ENCODE measurements at regions of chr10 and their contacts with region 1.

Region 1: GRCh38 chr10:133278577-133279265 is 2.1 kb upstream of the ADAM8 start:
- DNase-seq: peak; percentile 88 to 97 (median 96)
- H3K4me3 ChIP-seq: peak overlapping the region in 5 of 7 experiments; percentile 29 to 65 (median 53)
- H3K27ac ChIP-seq: peak overlapping the region; percentile 85 to 93
- H3K4me1 ChIP-seq: peaks cover 11 to 74% (median 71%) of the 10 kb centered on the region in 4 experiments
- H3K27me3 ChIP-seq: no peaks in the 10 kb centered on the region

Region 2: DNA sequence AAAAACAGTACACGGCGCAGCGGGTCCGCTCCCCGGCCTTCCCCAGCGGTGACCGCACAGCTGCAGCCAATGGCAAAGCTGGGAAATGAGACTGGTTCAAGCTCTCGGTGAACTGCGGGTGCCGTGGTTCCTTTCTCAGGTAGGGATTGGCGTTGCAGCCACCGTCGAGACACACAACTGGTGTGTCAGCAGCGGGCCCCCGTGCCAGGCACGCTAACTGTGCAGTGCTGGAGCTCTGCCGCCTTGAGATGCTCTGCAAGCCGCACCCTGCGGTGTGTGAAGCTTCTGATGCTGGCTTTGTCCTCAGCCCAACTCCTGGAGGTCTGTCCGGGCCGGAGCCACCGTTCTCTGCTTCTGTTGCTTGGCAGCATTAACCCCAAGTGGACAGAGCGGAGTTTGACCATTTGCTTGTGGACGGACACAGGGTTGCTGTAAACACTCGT is 472.1 kb before region 1 on chr10:
- CTCF ChIA-PET with region 1: no interaction called
- POLR2A ChIA-PET with region 1: no interaction called
- DNase-seq: no peak
- H3K4me3 ChIP-seq: no peak overlapping the region
- H3K27ac ChIP-seq: no peak overlapping the region
- H3K4me1 ChIP-seq: no peaks in the 10 kb centered on the region
- H3K27me3 ChIP-seq: peaks cover 0 to 35% (median 5%) of the 10 kb centered on the region in 5 experiments

Region 3: DNA sequence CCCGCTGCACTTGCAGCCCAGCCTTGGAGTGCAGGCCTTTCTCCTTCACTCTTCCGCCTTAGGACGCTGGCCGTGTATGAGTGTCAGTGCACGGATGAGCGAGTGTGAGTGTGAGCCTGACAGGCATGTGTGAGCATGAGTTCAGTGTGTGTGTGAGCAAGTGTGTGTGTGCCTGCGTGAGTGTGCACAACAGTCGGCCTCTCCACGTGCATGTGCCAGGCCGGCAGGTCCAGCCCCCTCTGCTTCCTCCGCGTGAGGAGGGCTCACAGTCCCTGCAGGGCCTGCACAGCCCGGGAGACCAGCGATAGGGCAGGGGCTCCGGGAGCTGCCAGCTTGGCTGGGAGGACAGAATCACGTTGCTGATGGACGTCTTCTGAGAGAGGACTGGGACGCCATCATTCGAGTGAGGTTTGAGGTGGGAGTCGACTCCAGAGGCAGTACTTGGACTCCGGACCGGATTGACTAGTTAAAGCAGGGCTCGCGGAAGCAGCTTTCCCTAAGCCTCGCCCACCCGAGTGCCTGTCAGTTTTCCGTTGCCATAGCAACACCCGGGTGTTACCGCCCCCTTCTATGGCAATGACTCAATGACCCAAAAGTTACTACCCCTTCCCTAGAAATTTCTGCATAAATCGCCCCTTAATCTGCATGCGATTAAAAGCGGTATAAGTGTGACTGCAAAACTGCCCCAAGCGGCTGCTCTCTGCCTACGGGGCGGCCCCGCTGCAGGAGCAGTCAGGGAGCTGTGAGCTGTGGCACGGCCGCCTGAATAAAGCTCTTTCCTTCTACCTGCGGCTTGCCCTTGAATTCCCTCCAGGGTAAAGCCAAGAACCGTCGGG is 316.7 kb before region 1 on chr10:
- CTCF ChIA-PET with region 1: no interaction called
- POLR2A ChIA-PET with region 1: no interaction called
- DNase-seq: peak; percentile 70 to 89 (median 85)
- H3K4me3 ChIP-seq: peak overlapping the region; percentile 42 to 95 (median 75)
- H3K27ac ChIP-seq: peak overlapping the region in 1 of 2 experiments; percentile 54
- H3K4me1 ChIP-seq: peaks cover 0 to 10% (median 4%) of the 10 kb centered on the region in 4 experiments
- H3K27me3 ChIP-seq: peaks cover 0 to 15% (median 7%) of the 10 kb centered on the region in 5 experiments

Region 4: DNA sequence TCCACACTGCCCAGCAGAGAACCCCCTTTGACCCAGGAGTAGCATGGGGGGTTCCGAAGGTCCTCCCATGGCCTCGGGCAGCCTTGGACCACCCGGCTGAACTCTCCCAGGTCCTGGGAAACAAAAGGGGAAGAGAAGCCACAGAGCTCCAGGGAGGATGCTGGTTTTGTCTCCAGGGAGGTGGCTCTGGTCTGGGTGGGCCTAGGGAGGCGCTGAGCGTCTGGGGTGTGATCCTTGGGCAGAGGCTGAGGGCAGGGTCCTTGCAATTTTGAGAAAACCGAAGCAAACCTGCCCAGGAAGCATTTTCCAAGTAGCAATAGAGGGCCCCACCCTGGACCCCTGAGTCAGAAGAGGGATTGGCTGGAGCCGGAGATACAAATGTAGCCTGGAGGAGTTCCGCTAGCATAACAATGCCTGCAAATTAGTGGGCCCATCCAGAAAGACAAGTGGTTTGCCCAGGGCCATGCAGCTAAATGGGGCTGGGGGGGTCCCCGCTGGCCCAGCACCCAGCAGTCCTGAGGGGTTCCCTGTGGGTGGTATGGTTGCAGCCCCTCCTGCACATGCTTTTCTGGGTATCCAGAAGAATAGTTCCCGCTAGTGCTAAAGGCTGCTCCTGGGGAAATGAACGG is 46.7 kb before region 1 on chr10:
- CTCF ChIA-PET with region 1: no interaction called
- POLR2A ChIA-PET with region 1: no interaction called
- DNase-seq: no peak
- H3K4me3 ChIP-seq: no peak overlapping the region
- H3K27ac ChIP-seq: no peak overlapping the region
- H3K4me1 ChIP-seq: peaks cover 0 to 37% (median 27%) of the 10 kb centered on the region in 4 experiments
- H3K27me3 ChIP-seq: peaks cover 0 to 91% (median 23%) of the 10 kb centered on the region in 5 experiments

Region 5: GRCh38 chr10:133261726-133262325 is 16.9 kb before region 1 on chr10:
- CTCF ChIA-PET with region 1: interaction called, 112 read pairs
- POLR2A ChIA-PET with region 1: interaction called, 63 read pairs
- DNase-seq: peak in 2 of 3 donors; percentile 64 to 70
- H3K4me3 ChIP-seq: peak overlapping the region in 6 of 7 experiments; percentile 19 to 74 (median 59)
- H3K27ac ChIP-seq: no peak overlapping the region
- H3K4me1 ChIP-seq: peaks cover 5 to 64% (median 61%) of the 10 kb centered on the region in 4 experiments
- H3K27me3 ChIP-seq: no peaks in the 10 kb centered on the region

Region 6: DNA sequence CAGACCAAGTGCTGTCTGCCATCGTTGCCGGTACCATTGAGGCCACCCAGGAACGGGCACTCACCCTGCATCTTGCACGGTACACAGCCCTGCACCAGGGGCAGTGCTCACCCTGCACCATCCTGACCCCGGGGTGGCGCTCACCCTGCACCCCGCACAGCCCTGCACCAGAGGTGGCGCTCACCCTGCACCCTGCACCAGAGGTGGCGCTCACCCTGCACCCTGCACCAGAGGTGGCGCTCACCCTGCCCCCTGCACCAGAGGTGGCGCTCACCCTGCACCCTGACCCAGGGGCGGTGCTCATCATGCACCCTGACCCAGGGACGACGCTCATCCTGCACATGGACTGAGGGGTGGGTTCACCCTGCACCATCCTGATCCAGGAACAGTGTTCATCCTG is 23.5 kb after region 1 on chr10:
- CTCF ChIA-PET with region 1: interaction called, 46 read pairs
- POLR2A ChIA-PET with region 1: interaction called, 11 read pairs
- DNase-seq: no peak
- H3K4me3 ChIP-seq: no peak overlapping the region
- H3K27ac ChIP-seq: no peak overlapping the region
- H3K4me1 ChIP-seq: peaks cover 0 to 10% (median 3%) of the 10 kb centered on the region in 4 experiments
- H3K27me3 ChIP-seq: no peaks in the 10 kb centered on the region

Region 7: GRCh38 chr10:133309111-133309719 is 30.5 kb after region 1 on chr10:
- CTCF ChIA-PET with region 1: interaction called, 46 read pairs
- POLR2A ChIA-PET with region 1: interaction called, 11 read pairs
- DNase-seq: peak; percentile 86 to 91 (median 89)
- H3K4me3 ChIP-seq: peak overlapping the region; percentile 81 to 96 (median 89)
- H3K27ac ChIP-seq: peak overlapping the region; percentile 91 to 96
- H3K4me1 ChIP-seq: peaks cover 0 to 23% (median 20%) of the 10 kb centered on the region in 4 experiments
- H3K27me3 ChIP-seq: no peaks in the 10 kb centered on the region

Measured in common myeloid progenitor, CD34-positive (primary cell).